Activated B cell treated with CpG ODN at 0.5 μM for 24 hours (primary cell): ENCODE measurements at regions of chr20 and their contacts with region 1.

Region 1: DNA sequence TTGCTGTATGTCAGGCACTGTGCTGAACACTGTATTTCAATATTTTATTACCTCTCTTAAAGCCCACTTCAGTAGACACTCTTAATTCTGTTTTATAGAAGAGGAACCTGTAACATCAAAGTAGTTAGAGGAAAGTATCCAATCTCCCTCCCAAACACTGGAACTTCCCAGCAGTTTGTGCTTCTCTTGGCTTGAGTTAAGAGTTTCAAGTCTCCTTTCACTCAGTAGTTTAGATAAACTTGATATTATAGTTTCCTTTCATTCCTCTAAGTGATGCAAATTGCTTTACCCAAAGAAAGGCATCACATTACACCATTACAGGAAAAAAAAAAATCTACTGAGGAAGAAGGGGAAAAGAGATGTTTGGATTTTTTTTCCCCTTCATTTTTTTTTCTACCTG is 164.3 kb downstream of the TSHZ2 start:
- DNase-seq: no peak
- ATAC-seq: no peak
- H3K4me3 Mint-ChIP-seq: no peak overlapping the region
- H3K27ac Mint-ChIP-seq: no peak overlapping the region
- H3K4me1 Mint-ChIP-seq: no peaks in the 10 kb centered on the region
- H3K27me3 Mint-ChIP-seq: no peaks in the 10 kb centered on the region
- CTCF ChIP-seq: no peak

Region 2: GRCh38 chr20:53061192-53062108 is 75.0 kb before region 1 on chr20:
- CTCF ChIA-PET with region 1: no interaction called
- POLR2A ChIA-PET with region 1: no interaction called
- intact Hi-C with region 1: no loop called
- DNase-seq: no peak
- ATAC-seq: no peak
- H3K4me3 Mint-ChIP-seq: no peak overlapping the region
- H3K27ac Mint-ChIP-seq: no peak overlapping the region
- H3K4me1 Mint-ChIP-seq: no peaks in the 10 kb centered on the region
- H3K27me3 Mint-ChIP-seq: no peaks in the 10 kb centered on the region
- CTCF ChIP-seq: no peak

Region 3: GRCh38 chr20:53104889-53105288 is 31.6 kb before region 1 on chr20:
- CTCF ChIA-PET with region 1: no interaction called
- POLR2A ChIA-PET with region 1: no interaction called
- intact Hi-C with region 1: loop called (anchors 1 kb)
- DNase-seq: no peak
- ATAC-seq: no peak
- H3K4me3 Mint-ChIP-seq: no peak overlapping the region
- H3K27ac Mint-ChIP-seq: no peak overlapping the region
- H3K4me1 Mint-ChIP-seq: peaks cover 20% of the 10 kb centered on the region
- H3K27me3 Mint-ChIP-seq: peaks cover 2% of the 10 kb centered on the region
- CTCF ChIP-seq: no peak